Left ventricle myocardium inferior (tissue), 1 donor: ENCODE measurements at regions of chr5 and their contacts with region 1.

Region 1: DNA sequence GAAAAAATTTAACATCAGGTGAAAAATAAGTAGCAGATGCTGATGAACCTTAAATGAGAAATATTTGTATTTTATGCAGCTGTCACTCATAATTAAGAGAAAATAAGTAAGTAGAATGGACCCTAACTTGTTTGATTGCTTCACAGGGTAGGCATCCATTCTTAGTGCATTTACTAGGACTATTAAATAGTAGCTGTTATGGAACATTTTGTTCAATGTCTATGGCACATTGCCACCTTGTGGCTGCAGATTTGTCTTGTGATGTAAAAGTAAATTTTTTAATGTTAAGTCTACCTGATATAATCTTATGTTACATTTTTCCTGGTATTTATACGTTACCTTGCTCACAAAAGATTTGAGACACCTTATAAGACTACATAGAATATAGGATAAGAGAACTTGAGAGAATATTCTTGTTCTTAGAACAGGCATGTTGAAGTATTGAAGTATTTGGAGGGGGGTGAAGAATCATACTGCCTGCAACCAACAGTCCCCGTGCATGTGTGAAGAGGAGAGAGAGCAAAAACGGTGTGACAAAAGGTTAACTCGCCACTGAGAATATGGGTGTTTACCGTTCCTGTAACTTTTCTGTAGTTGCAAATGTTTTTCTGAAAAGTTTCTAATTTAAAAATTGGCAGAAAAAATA is 161.1 kb downstream of the MAST4 start:
- DNase-seq: no peak
- H3K4me3 ChIP-seq: no peak overlapping the region
- H3K27ac ChIP-seq: no peak overlapping the region
- H3K4me1 ChIP-seq: peaks cover 21% of the 10 kb centered on the region
- H3K27me3 ChIP-seq: no peaks in the 10 kb centered on the region
- CTCF ChIP-seq: peak; percentile 60

Region 2: DNA sequence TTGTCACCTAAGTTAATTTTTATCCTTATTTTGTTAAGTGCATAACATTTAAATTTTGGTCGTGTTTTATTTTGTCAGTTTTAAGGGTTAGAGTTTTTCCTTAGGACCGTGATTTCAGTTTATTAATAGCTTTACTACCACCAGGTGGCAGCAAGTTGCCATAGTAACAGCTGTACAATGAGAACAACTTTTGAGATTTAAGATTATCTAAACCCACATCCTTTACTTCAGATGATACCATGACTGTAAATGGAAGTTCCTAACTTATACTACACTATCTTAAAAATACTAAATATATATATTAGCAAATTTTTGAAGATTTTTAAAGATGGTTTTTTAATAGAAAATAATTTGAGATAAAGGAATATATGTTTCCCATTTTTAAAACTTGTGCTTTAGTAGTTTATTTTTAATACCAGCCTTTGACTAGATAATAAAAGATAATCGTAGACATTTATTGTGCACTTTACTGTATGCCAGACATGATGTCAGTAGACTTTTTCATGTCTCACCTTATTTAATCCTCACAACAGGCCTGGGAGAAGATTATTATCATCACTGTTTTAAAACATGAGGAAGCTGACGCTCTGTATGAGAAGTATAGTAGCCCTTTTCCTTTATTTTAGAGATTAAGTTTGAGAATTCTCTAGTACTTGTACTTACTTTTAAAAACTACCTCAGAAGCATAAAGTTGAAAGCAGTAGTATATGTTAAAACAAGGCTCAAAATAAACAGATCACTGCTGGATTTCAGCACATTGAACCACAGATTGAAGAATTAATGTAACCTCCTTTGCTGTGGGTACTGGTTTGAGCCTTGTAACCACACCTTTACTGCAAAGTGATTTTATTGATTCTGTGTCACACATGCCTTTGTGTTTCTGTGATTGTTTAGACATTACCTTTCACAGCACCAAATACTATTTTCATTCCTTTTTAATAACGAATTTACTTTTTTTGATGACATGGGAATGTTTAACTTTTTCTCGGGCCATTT is 585.7 kb before region 1 on chr5:
- intact Hi-C with region 1: loop called (anchors 10 kb)
- DNase-seq: no peak
- H3K4me3 ChIP-seq: no peak overlapping the region
- H3K27ac ChIP-seq: no peak overlapping the region
- H3K4me1 ChIP-seq: peaks cover 20% of the 10 kb centered on the region
- H3K27me3 ChIP-seq: no peaks in the 10 kb centered on the region
- CTCF ChIP-seq: peak; percentile 64

Region 3: GRCh38 chr5:66306105-66306843 is 451.0 kb before region 1 on chr5:
- intact Hi-C with region 1: loop called (anchors 5 kb)
- DNase-seq: no peak
- H3K4me3 ChIP-seq: peak overlapping the region; percentile 19
- H3K27ac ChIP-seq: peak overlapping the region; percentile 79
- H3K4me1 ChIP-seq: peaks cover 30% of the 10 kb centered on the region
- H3K27me3 ChIP-seq: no peaks in the 10 kb centered on the region
- CTCF ChIP-seq: peak; percentile 81